Activated CD8-positive, alpha-beta T cell treated with anti-CD3 and anti-CD28 coated beads for 36 hours (primary cell): ENCODE measurements at regions of chr3 and their contacts with region 1.

Region 1: DNA sequence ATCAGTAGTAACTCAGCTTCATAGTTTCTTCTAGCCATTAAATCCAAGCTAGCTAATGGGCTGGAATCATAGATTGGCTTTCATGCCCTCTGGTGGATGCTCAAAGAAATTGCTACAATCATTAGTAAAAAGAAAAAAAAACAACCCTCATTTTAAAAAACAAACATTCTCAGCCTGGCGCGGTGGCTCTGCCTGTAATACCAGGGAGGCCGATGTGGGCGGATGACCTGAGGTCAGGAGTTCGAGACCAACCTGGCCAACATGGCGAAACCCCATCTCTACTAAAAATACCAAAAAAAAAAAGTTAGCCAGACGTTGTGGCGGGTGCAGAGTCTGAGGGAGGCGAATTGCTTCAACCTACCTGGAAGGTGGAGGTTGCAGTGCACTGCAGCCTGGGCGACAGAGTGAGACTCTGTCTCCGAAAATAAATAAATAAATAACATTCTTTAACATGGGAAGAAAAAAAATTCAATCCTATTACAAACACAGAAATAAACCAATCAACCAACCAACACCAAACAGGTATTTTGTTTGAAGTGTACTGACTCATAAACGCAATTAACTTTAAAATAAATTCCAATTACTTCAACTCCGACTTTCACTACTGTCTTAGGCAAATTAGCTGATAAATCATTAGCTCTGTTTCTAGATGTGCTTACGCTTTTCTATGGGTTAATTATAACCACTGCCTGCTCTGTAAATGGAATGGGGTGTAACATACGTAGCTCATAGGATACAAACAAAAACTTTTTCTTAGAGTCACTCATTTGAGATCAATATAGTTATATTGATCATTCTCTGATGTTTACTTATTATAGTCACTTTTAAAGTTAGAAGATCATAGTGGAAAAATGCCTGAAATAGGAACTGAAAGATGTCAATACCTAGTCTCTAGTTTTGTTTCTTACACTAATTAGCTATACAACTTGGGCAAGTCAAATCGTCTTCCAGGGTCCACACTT is 24.9 kb downstream of the TMEM207 start:
- DNase-seq: peak; percentile 66
- ATAC-seq: peak; percentile 77
- H3K4me3 Mint-ChIP-seq: no peak overlapping the region
- H3K27ac Mint-ChIP-seq: no peak overlapping the region
- H3K4me1 Mint-ChIP-seq: peaks cover 6% of the 10 kb centered on the region
- H3K27me3 Mint-ChIP-seq: peaks cover 2% of the 10 kb centered on the region
- CTCF ChIP-seq: peak; percentile 75

Region 2: DNA sequence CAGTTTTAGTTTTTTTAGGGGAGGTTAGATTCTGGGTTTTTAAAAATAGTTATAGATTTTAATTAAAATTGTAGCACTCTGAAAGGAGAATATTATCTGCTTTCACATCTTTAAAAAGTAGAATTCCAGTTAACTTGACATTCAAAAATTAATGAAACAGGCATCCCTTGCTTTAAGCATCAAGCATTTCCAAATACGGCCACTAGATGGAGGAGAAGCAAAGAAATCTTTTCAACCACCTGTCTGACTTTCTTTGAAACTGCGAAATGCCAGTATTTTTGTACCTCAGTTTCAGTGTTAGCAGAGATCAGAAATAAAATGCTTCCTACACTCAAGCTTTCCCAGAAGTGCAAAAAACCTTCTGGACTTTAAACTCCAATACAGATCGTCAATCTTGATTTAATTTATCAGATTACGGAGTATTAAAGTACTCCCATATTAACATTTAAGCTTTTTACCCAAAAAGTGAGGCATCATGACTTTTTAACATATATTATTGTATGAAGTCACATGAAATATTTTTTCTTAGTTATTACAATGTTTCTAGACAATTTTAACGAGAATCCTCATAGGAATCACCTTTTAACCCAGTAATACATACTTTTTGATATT is 457.4 kb before region 1 on chr3:
- CTCF ChIA-PET with region 1: interaction called, 10 read pairs
- POLR2A ChIA-PET with region 1: no interaction called
- intact Hi-C with region 1: loop called (anchors 5 kb)
- DNase-seq: peak; percentile 14
- ATAC-seq: peak; percentile 60
- H3K4me3 Mint-ChIP-seq: no peak overlapping the region
- H3K27ac Mint-ChIP-seq: no peak overlapping the region
- H3K4me1 Mint-ChIP-seq: no peaks in the 10 kb centered on the region
- H3K27me3 Mint-ChIP-seq: peaks cover 8% of the 10 kb centered on the region
- CTCF ChIP-seq: peak; percentile 85

Region 3: GRCh38 chr3:190224863-190225692 is 199.7 kb before region 1 on chr3:
- CTCF ChIA-PET with region 1: interaction called, 17 read pairs
- POLR2A ChIA-PET with region 1: no interaction called
- intact Hi-C with region 1: loop called (anchors 5 kb)
- DNase-seq: no peak
- ATAC-seq: no peak
- H3K4me3 Mint-ChIP-seq: no peak overlapping the region
- H3K27ac Mint-ChIP-seq: no peak overlapping the region
- H3K4me1 Mint-ChIP-seq: no peaks in the 10 kb centered on the region
- H3K27me3 Mint-ChIP-seq: peaks cover 6% of the 10 kb centered on the region
- CTCF ChIP-seq: peak; percentile 50

Region 4: DNA sequence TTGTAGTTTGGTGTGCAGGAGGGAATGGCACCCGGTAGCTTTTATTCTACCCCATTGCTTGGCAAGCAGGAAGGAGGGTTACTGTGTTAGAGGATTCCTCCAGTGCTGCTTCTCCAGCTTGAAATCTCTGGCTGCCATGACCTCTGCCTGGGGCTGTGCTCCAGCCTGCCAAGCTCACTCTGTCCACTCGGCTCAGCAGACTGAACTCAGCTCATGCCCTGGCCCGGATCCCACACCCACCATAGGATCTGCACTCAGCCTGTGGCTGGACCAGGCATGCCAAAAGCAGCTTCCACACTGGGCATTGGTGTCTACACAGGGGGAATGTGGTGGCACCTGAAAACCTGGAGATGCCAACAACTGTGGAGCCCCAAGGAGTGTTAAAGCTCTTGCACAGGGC is 10.5 kb before region 1 on chr3:
- CTCF ChIA-PET with region 1: interaction called, 16 read pairs
- POLR2A ChIA-PET with region 1: no interaction called
- intact Hi-C with region 1: no loop called
- DNase-seq: no peak
- ATAC-seq: no peak
- H3K4me3 Mint-ChIP-seq: no peak overlapping the region
- H3K27ac Mint-ChIP-seq: no peak overlapping the region
- H3K4me1 Mint-ChIP-seq: no peaks in the 10 kb centered on the region
- H3K27me3 Mint-ChIP-seq: peaks cover 3% of the 10 kb centered on the region
- CTCF ChIP-seq: no peak